Panc1 (cell line): ENCODE measurements at regions of chrX and their contacts with region 1.

Region 1: DNA sequence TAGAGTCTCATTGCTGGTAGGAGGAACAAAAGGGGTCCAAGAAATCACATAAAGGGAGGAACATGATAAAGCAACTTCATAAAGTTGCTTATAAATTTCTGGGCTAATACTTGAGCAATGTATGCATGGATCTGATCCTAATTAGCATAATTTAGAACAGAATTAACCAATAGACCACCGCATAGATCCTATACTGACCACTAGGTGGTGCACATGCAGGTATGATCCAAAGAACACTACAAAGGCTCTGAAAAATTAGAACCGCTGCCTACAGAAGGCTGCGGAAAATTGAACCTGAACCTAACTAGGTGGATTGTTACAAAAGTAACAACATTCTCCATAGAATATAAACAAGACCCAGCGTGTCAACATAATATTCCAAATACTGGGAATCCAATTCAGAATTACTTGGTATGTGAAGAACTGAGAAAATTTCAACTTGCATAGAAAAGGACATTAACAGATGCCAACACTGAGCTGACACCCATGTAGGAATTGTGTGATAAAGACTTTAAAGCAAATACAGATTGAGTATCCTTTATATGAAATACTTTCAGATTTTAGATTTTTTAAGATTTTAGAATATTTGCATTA is 23.3 kb downstream of the BRCC3 start:
- DNase-seq: no peak
- ATAC-seq: peak; percentile 89
- H3K4me3 ChIP-seq: no peak overlapping the region
- H3K27ac ChIP-seq: no peak overlapping the region
- H3K4me1 ChIP-seq: no peaks in the 10 kb centered on the region
- H3K27me3 ChIP-seq: no peaks in the 10 kb centered on the region
- CTCF ChIP-seq: peak; percentile 75; the same call in 1 of the 2 replicates

Region 2: GRCh38 chrX:154967603-154968002 is 127.0 kb before region 1 on chrX:
- CTCF ChIA-PET with region 1: no interaction called
- POLR2A ChIA-PET with region 1: interaction called, 10 read pairs
- in situ Hi-C with region 1: no loop called
- intact Hi-C with region 1: no loop called
- DNase-seq: peak; percentile 71
- ATAC-seq: peak; percentile 70; the same call in 1 of the 2 replicates
- H3K4me3 ChIP-seq: no peak overlapping the region
- H3K27ac ChIP-seq: no peak overlapping the region
- H3K4me1 ChIP-seq: no peaks in the 10 kb centered on the region
- H3K27me3 ChIP-seq: no peaks in the 10 kb centered on the region
- CTCF ChIP-seq: no peak

Region 3: DNA sequence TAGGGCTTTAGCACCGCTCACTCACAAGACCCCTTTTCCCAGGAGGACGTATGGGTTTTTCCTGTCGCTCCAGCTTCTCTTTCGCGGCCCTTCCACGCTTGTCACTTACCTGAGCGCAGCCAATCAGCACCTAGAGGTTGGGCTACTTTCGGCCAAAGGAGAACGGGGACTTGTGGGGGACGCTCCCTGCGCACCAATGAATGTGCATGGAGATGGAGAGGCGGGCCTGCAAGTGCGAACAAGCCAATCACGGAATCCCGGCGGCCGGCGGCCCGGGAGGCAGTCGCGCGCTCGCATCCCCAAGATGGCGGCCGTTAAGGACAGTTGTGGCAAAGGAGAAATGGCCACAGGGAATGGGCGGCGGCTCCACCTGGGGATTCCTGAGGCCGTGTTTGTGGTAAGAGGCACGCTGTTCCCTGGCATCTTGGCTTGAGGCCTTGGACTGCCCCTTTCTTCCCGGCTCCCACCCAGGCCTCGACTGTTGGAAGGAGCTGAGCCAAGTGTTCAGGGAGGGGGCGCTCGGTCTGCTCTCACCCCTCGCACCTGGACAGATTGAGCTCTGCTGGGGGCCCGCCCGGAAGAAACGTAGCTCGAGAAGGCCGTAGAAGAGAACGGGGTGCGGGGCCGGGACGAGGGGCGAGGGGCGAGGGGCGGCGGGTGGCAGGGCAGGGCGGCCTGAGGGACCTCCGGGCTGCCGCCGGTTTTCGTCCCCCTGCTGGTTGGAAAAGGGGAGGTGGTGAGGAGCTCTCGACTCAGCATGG is 121.8 kb after region 1 on chrX and contains the start of gene VBP1:
- CTCF ChIA-PET with region 1: no interaction called
- POLR2A ChIA-PET with region 1: no interaction called
- in situ Hi-C with region 1: no loop called
- intact Hi-C with region 1: loop called (anchors 10 kb)
- DNase-seq: peak; percentile 88
- ATAC-seq: peak; percentile 99
- H3K4me3 ChIP-seq: peak within 1 kb of the TSS; percentile 94 to 100
- H3K27ac ChIP-seq: peak within 1 kb of the TSS; percentile 83
- H3K4me1 ChIP-seq: peaks cover 21% of the 10 kb centered on the region
- H3K27me3 ChIP-seq: no peaks in the 10 kb centered on the region
- CTCF ChIP-seq: peak; percentile 74
- total RNA-seq, gene VBP1: 126 TPM

Region 4: DNA sequence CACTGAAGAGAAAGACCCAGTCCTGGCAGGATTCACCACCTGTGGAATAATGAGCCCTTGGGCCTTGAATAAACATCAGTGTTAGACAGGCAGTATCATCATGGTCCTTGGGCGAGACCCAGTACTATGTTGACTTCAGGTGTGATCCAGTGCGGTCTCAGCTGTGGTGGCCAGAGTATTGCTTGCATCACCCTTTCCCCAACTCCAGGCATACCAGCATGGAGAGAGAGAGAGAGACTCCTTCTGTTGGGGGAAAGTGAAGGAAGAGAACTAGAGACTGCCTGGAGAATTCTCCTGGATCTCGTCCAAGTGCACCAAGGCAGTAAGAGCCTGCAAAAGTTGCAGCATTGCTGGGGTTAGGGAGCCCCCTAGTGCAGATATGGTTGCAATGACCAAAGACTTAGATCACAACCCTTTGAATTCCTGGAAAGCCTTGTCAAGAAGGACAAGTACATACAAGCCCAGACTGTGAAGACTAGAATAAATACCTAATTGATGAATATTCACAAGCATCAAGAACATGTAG is 725.5 kb after region 1 on chrX:
- CTCF ChIA-PET with region 1: no interaction called
- POLR2A ChIA-PET with region 1: no interaction called
- in situ Hi-C with region 1: no loop called
- intact Hi-C with region 1: loop called (anchors 10 kb)
- DNase-seq: peak; percentile 66
- ATAC-seq: peak; percentile 95
- H3K4me3 ChIP-seq: no peak overlapping the region
- H3K27ac ChIP-seq: no peak overlapping the region
- H3K4me1 ChIP-seq: no peaks in the 10 kb centered on the region
- H3K27me3 ChIP-seq: no peaks in the 10 kb centered on the region
- CTCF ChIP-seq: peak; percentile 78